Right ventricle myocardium superior (tissue), 1 donor: ENCODE measurements at regions of chr11 and their contacts with region 1.

Region 1: GRCh38 chr11:59615637-59616395 is at the start of gene OSBP:
- DNase-seq: peak; percentile 99
- ATAC-seq: peak; percentile 92
- total RNA-seq, gene OSBP: 33.1 TPM

Region 2: GRCh38 chr11:59550368-59550841 is 65.4 kb before region 1 on chr11:
- intact Hi-C with region 1: loop called (anchors 10 kb)
- DNase-seq: peak; percentile 77
- ATAC-seq: peak; percentile 86

Region 3: DNA sequence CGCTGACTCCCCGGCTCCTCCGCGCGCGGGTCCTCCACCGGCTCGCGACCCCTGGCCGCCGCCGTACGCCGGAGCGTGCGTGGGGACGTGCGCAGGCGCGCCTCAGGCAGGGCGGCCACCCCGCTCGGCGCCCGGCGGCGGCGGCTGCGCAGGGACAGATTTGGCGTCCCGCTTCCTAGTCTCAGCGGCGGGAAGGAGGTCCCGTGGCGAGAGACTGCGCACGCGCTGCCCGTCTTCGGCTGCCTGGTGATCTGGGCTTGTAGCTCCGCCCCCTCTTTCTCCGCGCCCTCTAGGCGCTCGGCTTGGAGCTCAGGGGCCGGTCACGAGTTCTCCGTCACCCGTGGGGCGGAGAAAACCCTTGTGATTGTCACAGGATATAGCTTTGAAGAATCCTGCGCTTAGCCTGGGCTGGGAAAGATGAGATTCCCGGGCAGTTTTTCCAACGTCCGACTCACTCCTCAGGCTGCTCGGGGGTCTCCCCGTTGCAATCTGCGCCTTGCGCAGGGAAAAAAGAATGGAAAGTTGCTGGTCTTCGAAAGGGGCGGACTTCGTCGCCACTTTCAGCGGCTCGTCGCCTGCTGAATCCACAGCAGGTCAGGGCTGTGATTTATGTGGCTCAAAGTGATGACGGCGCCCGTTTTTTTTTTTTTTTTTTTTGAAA is 53.3 kb after region 1 on chr11 and contains the start of gene PATL1:
- intact Hi-C with region 1: loop called (anchors 5 kb)
- DNase-seq: peak; percentile 100
- ATAC-seq: peak; percentile 98
- total RNA-seq, gene PATL1: 21.6 TPM